ENCODE measurements at regions of chr7 and their contacts with region 1.

Region 1: DNA sequence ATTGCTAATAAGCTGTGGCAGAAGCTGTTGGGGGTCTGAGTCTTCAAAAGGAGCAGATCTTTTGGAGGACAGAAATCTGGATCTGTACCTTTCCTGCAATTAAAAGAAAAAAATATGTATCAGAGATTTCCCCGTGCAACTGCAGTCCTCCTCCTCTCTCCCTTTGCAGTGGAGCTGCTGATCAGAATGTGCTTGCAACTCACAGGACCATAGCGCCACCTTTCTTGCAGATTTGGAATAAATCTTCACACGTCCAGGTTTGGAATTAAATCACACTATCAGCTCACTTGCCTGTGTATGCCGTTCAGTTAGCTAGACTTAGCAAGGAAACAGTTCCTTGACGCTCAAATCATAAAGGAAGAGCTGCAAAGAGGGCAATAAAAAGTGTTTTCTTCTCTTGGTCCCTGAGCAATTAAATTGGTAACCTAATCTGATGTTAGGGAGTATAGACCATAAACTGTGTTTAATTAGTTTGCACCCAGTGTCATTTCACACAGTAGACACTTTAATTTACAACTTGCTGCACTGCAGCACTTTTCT is 77.4 kb downstream of the PON1 start:
- DNase-seq: peak; percentile 87
- H3K4me3 ChIP-seq: no peak overlapping the region
- H3K27ac ChIP-seq: no peak overlapping the region
- H3K4me1 ChIP-seq: peaks cover 5% of the 10 kb centered on the region
- H3K27me3 ChIP-seq: no peaks in the 10 kb centered on the region
- CTCF ChIP-seq: peak; percentile 89

Region 2: DNA sequence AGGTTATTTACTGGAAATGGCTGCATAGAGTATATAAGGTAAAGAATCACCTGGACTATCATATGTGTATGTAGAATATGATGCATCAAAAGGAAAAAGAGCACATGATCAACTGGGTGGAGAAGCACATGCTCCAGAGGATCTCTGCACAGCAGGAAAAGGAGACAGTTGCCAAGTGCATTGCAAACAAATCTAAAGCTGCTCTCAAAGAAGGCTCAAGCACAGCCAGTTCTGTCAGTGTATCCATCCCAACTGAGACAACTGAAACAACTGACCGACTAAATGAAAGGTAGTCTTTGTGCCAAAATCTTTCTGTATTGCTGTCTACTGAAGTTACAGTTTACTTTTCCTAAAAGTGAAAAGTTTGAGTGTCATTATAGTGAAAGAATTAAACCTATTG is 507.7 kb before region 1 on chr7:
- CTCF ChIA-PET with region 1: no interaction called
- POLR2A ChIA-PET with region 1: no interaction called
- intact Hi-C with region 1: no loop called
- DNase-seq: peak; percentile 18
- H3K4me3 ChIP-seq: no peak overlapping the region
- H3K27ac ChIP-seq: no peak overlapping the region
- H3K4me1 ChIP-seq: peaks cover 4% of the 10 kb centered on the region
- H3K27me3 ChIP-seq: no peaks in the 10 kb centered on the region
- CTCF ChIP-seq: no peak

Region 3: GRCh38 chr7:95052566-95053094 is 194.3 kb before region 1 on chr7:
- CTCF ChIA-PET with region 1: no interaction called
- POLR2A ChIA-PET with region 1: no interaction called
- intact Hi-C with region 1: loop called (anchors 5 kb)
- DNase-seq: no peak
- H3K4me3 ChIP-seq: no peak overlapping the region
- H3K27ac ChIP-seq: no peak overlapping the region
- H3K4me1 ChIP-seq: peaks cover 7% of the 10 kb centered on the region
- H3K27me3 ChIP-seq: no peaks in the 10 kb centered on the region
- CTCF ChIP-seq: no peak

Region 4: DNA sequence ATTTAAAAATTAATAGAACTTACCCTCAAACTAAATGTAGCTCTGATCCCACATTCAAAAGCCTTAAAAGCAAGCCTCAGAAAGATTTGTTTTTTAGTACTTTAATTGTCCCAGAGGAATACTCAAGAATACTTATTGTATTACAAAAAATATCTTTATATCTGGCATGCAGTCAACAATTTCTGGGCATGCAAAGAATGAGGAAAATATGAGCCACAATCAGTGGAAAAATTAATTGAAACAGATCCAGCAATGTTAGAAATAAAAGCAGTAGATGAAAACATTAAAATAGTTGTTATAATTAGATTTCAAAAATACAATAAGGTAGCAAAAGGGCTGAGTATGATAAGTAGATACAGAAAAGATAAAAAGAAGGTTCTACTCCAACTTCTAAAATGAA is 77.2 kb before region 1 on chr7:
- CTCF ChIA-PET with region 1: no interaction called
- POLR2A ChIA-PET with region 1: no interaction called
- intact Hi-C with region 1: no loop called
- DNase-seq: no peak
- H3K4me3 ChIP-seq: no peak overlapping the region
- H3K27ac ChIP-seq: no peak overlapping the region
- H3K4me1 ChIP-seq: no peaks in the 10 kb centered on the region
- H3K27me3 ChIP-seq: no peaks in the 10 kb centered on the region
- CTCF ChIP-seq: no peak

Region 5: GRCh38 chr7:96188174-96188581 is 941.3 kb after region 1 on chr7:
- CTCF ChIA-PET with region 1: no interaction called
- POLR2A ChIA-PET with region 1: no interaction called
- intact Hi-C with region 1: no loop called
- DNase-seq: no peak
- H3K4me3 ChIP-seq: no peak overlapping the region
- H3K27ac ChIP-seq: no peak overlapping the region
- H3K4me1 ChIP-seq: peaks cover 11% of the 10 kb centered on the region
- H3K27me3 ChIP-seq: no peaks in the 10 kb centered on the region
- CTCF ChIP-seq: no peak

Measured in A673 (cell line).